ENCODE measurements at regions of chr2 and their contacts with region 1.

Region 1: GRCh38 chr2:134118279-134119116 is 135.4 kb upstream of the MGAT5 start:
- DNase-seq: peak; percentile 87
- H3K4me3 ChIP-seq: no peak overlapping the region
- H3K27me3 ChIP-seq: no peaks in the 10 kb centered on the region; the same call in 1 of the 2 replicates
- CTCF ChIP-seq: peak; percentile 77

Region 2: DNA sequence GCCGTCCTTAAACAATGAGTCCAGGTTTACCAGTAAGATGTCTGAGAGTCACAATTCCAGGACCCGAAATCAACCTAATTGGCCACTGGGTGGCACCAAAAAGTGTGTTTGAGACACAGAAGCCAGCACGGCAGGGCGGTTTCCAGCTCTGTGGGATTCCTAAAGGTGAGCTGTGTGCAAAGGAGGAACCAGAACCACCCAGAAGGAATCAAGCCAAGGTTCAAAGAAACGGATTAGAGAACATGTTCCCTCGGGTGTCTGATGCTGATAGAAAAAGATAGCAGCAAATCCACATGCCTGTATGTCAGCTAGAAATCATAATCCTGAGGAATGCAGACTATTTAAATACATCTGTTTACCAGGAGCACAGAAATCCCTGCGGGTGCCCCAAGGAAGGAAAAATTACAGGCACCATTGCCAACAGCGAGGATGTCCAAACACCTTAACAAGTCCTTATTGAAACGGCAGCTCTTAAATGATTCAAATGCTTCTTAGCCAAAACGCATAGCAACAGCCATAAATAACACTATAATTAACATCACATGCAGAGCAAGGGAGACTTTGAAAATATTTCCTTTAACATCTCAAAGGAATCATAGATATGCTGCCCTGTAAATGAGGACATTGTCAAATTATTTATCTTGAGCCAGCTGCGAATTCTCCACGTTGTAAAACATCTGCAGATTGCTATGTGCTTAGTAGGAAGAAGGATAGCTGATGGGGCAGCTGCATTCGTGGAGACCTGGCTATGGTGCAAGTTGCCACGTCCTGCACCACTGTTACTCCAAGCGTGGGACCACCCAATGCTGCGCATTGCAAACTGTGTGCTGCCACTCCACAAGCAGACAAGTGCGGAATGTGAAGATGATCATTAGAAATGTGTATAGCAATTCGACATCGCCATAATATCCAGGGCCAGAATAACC is 231.5 kb before region 1 on chr2:
- CTCF ChIA-PET with region 1: interaction called, 52 read pairs
- POLR2A ChIA-PET with region 1: interaction called, 4 read pairs
- DNase-seq: peak; percentile 94
- H3K4me3 ChIP-seq: no peak overlapping the region
- H3K27me3 ChIP-seq: peaks cover 4% of the 10 kb centered on the region; the same call in 1 of the 2 replicates
- CTCF ChIP-seq: peak; percentile 65

Region 3: DNA sequence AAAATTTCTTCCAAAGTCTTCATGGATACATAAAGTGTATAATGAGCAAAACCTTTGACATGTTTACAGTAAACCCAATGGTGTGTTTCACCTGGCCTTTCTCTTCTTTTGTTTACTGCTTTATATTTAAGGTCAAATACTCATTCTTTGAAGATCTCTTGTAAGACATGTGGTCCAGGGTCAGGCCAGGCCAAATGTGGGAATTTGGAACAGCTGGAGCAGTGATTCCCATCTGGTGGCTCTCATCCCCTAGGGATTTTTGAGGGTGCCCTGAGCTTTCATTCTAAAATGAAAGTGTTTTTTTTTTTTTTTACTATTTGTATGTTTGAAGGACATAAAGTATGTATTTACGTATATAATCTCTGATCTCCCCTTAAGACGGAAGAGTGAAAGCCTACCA is 121.6 kb after region 1 on chr2:
- CTCF ChIA-PET with region 1: interaction called, 77 read pairs
- POLR2A ChIA-PET with region 1: no interaction called
- DNase-seq: no peak
- H3K4me3 ChIP-seq: no peak overlapping the region
- H3K27me3 ChIP-seq: no peaks in the 10 kb centered on the region
- CTCF ChIP-seq: no peak

Region 4: GRCh38 chr2:134375935-134376334 is 257.4 kb after region 1 on chr2:
- CTCF ChIA-PET with region 1: interaction called, 11 read pairs
- POLR2A ChIA-PET with region 1: no interaction called
- DNase-seq: no peak
- H3K4me3 ChIP-seq: no peak overlapping the region
- H3K27me3 ChIP-seq: no peaks in the 10 kb centered on the region
- CTCF ChIP-seq: peak; percentile 31; the same call in 1 of the 2 replicates

Region 5: GRCh38 chr2:134411828-134412638 is 293.5 kb after region 1 on chr2:
- CTCF ChIA-PET with region 1: interaction called, 134 read pairs
- POLR2A ChIA-PET with region 1: interaction called, 3 read pairs
- DNase-seq: no peak
- H3K4me3 ChIP-seq: no peak overlapping the region
- H3K27me3 ChIP-seq: no peaks in the 10 kb centered on the region
- CTCF ChIP-seq: peak; percentile 88